ENCODE measurements at regions of chr11 and their contacts with region 1.

Region 1: GRCh38 chr11:4072668-4073285 is 21.8 kb upstream of the RRM1 start:
- DNase-seq: no peak
- ATAC-seq: peak; percentile 79
- H3K4me3 Mint-ChIP-seq: no peak overlapping the region
- H3K27ac Mint-ChIP-seq: peak overlapping the region; percentile 77
- H3K4me1 Mint-ChIP-seq: peaks cover 18% of the 10 kb centered on the region
- H3K27me3 Mint-ChIP-seq: no peaks in the 10 kb centered on the region
- CTCF ChIP-seq: no peak

Region 2: DNA sequence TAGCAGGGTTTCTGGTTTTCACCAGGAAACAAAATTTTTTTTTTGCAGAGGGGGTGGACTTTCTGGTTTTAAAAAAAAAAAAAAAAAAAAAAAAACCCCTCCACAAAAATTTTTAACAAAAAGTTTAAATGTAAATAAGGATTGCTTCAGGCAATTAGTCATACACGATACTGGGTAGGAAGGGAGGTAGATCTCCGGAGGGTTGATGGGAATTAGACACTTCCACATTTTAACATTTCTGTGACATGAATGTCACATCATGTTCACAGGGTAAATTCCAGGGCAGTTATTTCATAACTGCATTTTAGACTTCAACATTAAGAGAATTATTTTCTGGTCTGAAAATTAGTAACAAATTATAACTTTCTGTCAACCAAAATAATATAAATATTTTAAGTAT is 291.4 kb before region 1 on chr11:
- CTCF ChIA-PET with region 1: interaction called, 12 read pairs
- POLR2A ChIA-PET with region 1: interaction called, 18 read pairs
- intact Hi-C with region 1: loop called (anchors 1 kb)
- DNase-seq: no peak
- ATAC-seq: no peak
- H3K4me3 Mint-ChIP-seq: no peak overlapping the region
- H3K27ac Mint-ChIP-seq: peak overlapping the region; percentile 56
- H3K4me1 Mint-ChIP-seq: peaks cover 46% of the 10 kb centered on the region
- H3K27me3 Mint-ChIP-seq: no peaks in the 10 kb centered on the region
- CTCF ChIP-seq: no peak

Region 3: GRCh38 chr11:3824714-3825472 is 247.9 kb before region 1 on chr11:
- CTCF ChIA-PET with region 1: interaction called, 11 read pairs
- POLR2A ChIA-PET with region 1: no interaction called
- intact Hi-C with region 1: loop called (anchors 1 kb)
- DNase-seq: peak; percentile 70
- ATAC-seq: peak; percentile 98
- H3K4me3 Mint-ChIP-seq: no peak overlapping the region
- H3K27ac Mint-ChIP-seq: peak overlapping the region; percentile 42
- H3K4me1 Mint-ChIP-seq: peaks cover 28% of the 10 kb centered on the region
- H3K27me3 Mint-ChIP-seq: no peaks in the 10 kb centered on the region
- CTCF ChIP-seq: peak; percentile 48

Region 4: GRCh38 chr11:3849297-3849874 is 223.4 kb before region 1 on chr11:
- CTCF ChIA-PET with region 1: interaction called, 526 read pairs
- POLR2A ChIA-PET with region 1: interaction called, 37 read pairs
- intact Hi-C with region 1: loop called (anchors 1 kb)
- DNase-seq: no peak
- ATAC-seq: peak; percentile 62
- H3K4me3 Mint-ChIP-seq: no peak overlapping the region
- H3K27ac Mint-ChIP-seq: no peak overlapping the region
- H3K4me1 Mint-ChIP-seq: peaks cover 22% of the 10 kb centered on the region
- H3K27me3 Mint-ChIP-seq: no peaks in the 10 kb centered on the region
- CTCF ChIP-seq: no peak

Region 5: GRCh38 chr11:3984896-3985295 is 87.9 kb before region 1 on chr11:
- CTCF ChIA-PET with region 1: interaction called, 5 read pairs
- POLR2A ChIA-PET with region 1: no interaction called
- intact Hi-C with region 1: loop called (anchors 5 kb)
- DNase-seq: no peak
- ATAC-seq: peak; percentile 73
- H3K4me3 Mint-ChIP-seq: no peak overlapping the region
- H3K27ac Mint-ChIP-seq: no peak overlapping the region
- H3K4me1 Mint-ChIP-seq: peaks cover 38% of the 10 kb centered on the region
- H3K27me3 Mint-ChIP-seq: no peaks in the 10 kb centered on the region
- CTCF ChIP-seq: no peak

Region 6: DNA sequence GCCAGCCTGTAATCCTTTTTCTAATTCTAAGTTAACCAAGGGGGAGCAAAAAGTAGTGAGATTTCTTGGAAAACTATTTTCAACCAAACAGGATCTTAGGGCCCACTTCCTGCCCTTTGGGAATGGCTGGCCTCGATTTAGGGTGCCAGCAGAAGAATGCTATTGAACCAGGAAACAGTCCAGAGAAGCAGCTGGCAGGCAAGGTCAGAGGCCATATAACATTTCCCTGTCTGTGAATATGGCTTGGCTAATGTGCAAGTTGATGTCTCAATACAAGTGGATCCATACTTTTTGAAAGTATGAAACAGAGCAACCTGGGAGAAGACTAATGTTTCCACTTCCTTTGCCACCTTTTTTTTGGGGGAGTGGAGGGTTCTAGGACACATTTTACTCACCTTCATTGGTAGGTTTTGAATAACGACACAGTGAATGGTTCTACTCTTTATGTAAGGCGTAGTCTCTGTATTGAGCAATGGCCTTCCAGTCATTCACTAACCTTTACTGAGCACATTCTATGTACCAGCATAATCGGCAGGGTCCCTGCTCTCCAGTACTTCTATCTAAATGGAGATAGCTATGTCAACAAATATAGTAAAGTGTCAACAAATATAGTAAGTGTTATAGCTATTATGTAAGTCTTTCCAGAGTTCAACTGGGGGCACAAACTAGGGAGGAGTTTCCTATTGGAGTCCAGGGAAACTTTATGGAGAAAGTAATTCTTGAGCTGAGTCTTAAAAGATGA is 12.4 kb before region 1 on chr11:
- CTCF ChIA-PET with region 1: interaction called, 65 read pairs
- POLR2A ChIA-PET with region 1: interaction called, 8 read pairs
- intact Hi-C with region 1: loop called (anchors 1 kb)
- DNase-seq: no peak
- ATAC-seq: no peak
- H3K4me3 Mint-ChIP-seq: no peak overlapping the region
- H3K27ac Mint-ChIP-seq: no peak overlapping the region
- H3K4me1 Mint-ChIP-seq: peaks cover 27% of the 10 kb centered on the region
- H3K27me3 Mint-ChIP-seq: no peaks in the 10 kb centered on the region
- CTCF ChIP-seq: no peak